ENCODE measurements at regions of chr3 and their contacts with region 1.

Region 1: GRCh38 chr3:170307671-170308403 is 49.7 kb upstream of the SKIL start:
- DNase-seq: no peak
- H3K4me3 Mint-ChIP-seq: no peak overlapping the region
- H3K27ac Mint-ChIP-seq: no peak overlapping the region
- H3K4me1 Mint-ChIP-seq: no peaks in the 10 kb centered on the region
- H3K27me3 Mint-ChIP-seq: no peaks in the 10 kb centered on the region

Region 2: GRCh38 chr3:170257145-170257544 is 50.7 kb before region 1 on chr3:
- intact Hi-C with region 1: no loop called
- DNase-seq: no peak
- H3K4me3 Mint-ChIP-seq: no peak overlapping the region
- H3K27ac Mint-ChIP-seq: peak overlapping the region; percentile 54
- H3K4me1 Mint-ChIP-seq: peaks cover 37% of the 10 kb centered on the region
- H3K27me3 Mint-ChIP-seq: no peaks in the 10 kb centered on the region

Region 3: GRCh38 chr3:170357176-170357919 is 49.5 kb after region 1 on chr3 and contains the start of gene SKIL:
- intact Hi-C with region 1: loop called (anchors 5 kb)
- DNase-seq: peak; percentile 93
- H3K4me3 Mint-ChIP-seq: peak within 1 kb of the TSS; percentile 95
- H3K27ac Mint-ChIP-seq: peak within 1 kb of the TSS; percentile 97
- H3K4me1 Mint-ChIP-seq: peaks cover 30% of the 10 kb centered on the region
- H3K27me3 Mint-ChIP-seq: peaks cover 8% of the 10 kb centered on the region
- total RNA-seq, gene SKIL: 31.2 and 33.2 TPM in 2 replicates

Region 4: GRCh38 chr3:170811928-170812591 is 504.2 kb after region 1 on chr3:
- intact Hi-C with region 1: loop called (anchors 5 kb)
- DNase-seq: peak; percentile 56
- H3K4me3 Mint-ChIP-seq: no peak overlapping the region
- H3K27ac Mint-ChIP-seq: no peak overlapping the region
- H3K4me1 Mint-ChIP-seq: peaks cover 10% of the 10 kb centered on the region
- H3K27me3 Mint-ChIP-seq: peaks cover 6% of the 10 kb centered on the region

Measured in activated T-helper 2 cell treated with anti-CD3 and anti-CD28 coated beads, Interferon-gamma antibody, Interleukin-2, Interleukin-4, amounts not matched to agents 10 μg/mL and 5 μg/mL and 100 μg/mL, durations not matched to agents 14 hours and 24 hours and 36 hours (primary cell).